Gastrocnemius medialis (tissue), 4 donors: ENCODE measurements at regions of chr15 and their contacts with region 1.

Region 1: GRCh38 chr15:60362321-60363086 is 35.3 kb downstream of the ANXA2 start:
- DNase-seq: peak in 1 of 2 donors; percentile 22
- ATAC-seq: peak; percentile 26 to 33
- H3K4me3 ChIP-seq: no peak overlapping the region
- H3K27ac ChIP-seq: peak overlapping the region; percentile 71 to 89 (median 88)
- H3K4me1 ChIP-seq: peaks cover 36 to 62% of the 10 kb centered on the region in 2 donors
- H3K27me3 ChIP-seq: no peaks in the 10 kb centered on the region
- CTCF ChIP-seq: no peak
- POLR2A ChIP-seq: no peak

Region 2: DNA sequence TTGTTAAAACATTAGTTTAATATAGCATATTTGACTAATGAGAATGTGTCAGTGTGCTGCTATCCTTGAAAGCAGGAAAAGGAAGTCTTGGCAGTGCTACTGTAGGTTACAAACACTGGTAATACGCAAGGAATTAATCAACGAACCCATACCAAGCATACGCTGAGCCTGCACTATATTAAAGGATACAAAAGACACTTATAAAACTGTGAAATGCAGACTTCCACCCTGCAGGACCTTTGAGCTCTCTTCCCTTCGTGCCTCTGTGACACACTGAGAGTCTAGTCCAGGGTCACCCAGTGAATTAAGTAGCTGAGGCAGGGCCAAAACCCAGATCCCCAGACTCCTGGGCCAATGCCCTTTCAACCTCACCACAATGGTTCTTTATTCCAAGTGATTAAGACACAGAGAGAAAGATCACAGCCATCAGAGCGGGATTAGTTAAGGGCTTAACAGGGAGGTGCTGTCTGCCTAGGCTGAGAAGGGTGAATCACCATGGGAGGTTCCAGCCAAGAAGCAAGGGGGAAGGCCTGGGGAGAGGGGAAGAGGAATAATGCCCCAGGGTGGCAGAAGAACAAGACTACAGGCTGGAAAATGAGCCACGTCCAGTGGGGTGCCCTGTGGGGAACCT is 28.5 kb after region 1 on chr15:
- in situ Hi-C with region 1: no loop called
- intact Hi-C with region 1: loop called (anchors 2 kb)
- DNase-seq: peak in 1 of 2 donors; percentile 75
- ATAC-seq: peak; percentile 72 to 81
- H3K4me3 ChIP-seq: peak overlapping the region in 2 of 4 donors; percentile 10 to 16
- H3K27ac ChIP-seq: peak overlapping the region; percentile 94 to 99 (median 98)
- H3K4me1 ChIP-seq: peaks cover 87 to 94% of the 10 kb centered on the region in 2 donors
- H3K27me3 ChIP-seq: no peaks in the 10 kb centered on the region
- CTCF ChIP-seq: peak in 1 of 5 experiments; percentile 10
- POLR2A ChIP-seq: no peak

Region 3: DNA sequence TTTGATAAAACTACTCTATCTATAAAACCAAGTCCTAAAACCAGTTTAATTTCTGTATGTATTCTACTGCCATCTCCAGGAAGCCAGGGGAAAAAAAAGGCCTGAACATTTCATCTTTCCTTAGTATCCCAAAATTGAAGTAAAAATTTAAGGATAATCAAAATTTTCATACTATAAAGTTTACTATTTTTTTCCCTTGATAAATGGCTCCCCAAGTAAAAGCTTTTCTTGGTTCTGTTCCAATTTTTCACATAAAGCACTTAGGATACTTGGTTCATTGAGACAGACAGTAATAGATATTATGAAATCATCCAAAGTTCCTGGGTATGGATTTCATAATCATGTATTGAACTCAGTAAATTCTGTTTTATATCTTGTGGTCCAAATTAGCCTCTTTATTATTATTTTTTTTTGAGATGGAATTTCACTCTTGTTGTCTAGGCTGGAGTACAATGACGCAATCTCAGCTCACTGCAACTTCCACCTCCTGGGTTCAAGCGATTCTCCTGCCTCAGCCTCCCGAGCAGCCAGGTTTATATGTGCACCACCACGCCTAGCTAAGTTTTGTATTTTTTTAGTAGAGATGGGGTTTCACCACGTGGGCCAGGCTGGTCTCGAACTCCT is 81.9 kb after region 1 on chr15:
- in situ Hi-C with region 1: loop called (anchors 5 to 10 kb)
- intact Hi-C with region 1: loop called (anchors 1 kb)
- DNase-seq: no peak
- ATAC-seq: peak in 1 of 2 donors; percentile 72
- H3K4me3 ChIP-seq: no peak overlapping the region
- H3K27ac ChIP-seq: peak overlapping the region in 1 of 4 donors; percentile 27
- H3K4me1 ChIP-seq: no peaks in the 10 kb centered on the region
- H3K27me3 ChIP-seq: no peaks in the 10 kb centered on the region
- CTCF ChIP-seq: peak; percentile 36 to 68 (median 58)
- POLR2A ChIP-seq: no peak

Region 4: GRCh38 chr15:60520825-60521368 is 158.4 kb after region 1 on chr15:
- in situ Hi-C with region 1: no loop called
- intact Hi-C with region 1: loop called (anchors 5 kb)
- DNase-seq: peak; percentile 42 to 59
- ATAC-seq: peak; percentile 30 to 73
- H3K4me3 ChIP-seq: no peak overlapping the region
- H3K27ac ChIP-seq: peak overlapping the region; percentile 56 to 77 (median 68)
- H3K4me1 ChIP-seq: peaks cover 23 to 28% of the 10 kb centered on the region in 2 donors
- H3K27me3 ChIP-seq: no peaks in the 10 kb centered on the region
- CTCF ChIP-seq: peak; percentile 79 to 91 (median 84)
- POLR2A ChIP-seq: no peak